ENCODE measurements at regions of chr7 and their contacts with region 1.

Region 1: GRCh38 chr7:65037740-65038678 is 31.5 kb upstream of the ERV3-1 start:
- DNase-seq: peak; percentile 96
- H3K4me3 ChIP-seq: peak overlapping the region; percentile 72 to 92 (median 90)
- H3K27ac ChIP-seq: peak overlapping the region; percentile 88 to 95 (median 92)
- H3K4me1 ChIP-seq: peaks cover 0 to 17% (median 5%) of the 10 kb centered on the region in 4 donors
- H3K27me3 ChIP-seq: no peaks in the 10 kb centered on the region
- CTCF ChIP-seq: no peak
- EP300 ChIP-seq: no peak
- POLR2A ChIP-seq: no peak

Region 2: DNA sequence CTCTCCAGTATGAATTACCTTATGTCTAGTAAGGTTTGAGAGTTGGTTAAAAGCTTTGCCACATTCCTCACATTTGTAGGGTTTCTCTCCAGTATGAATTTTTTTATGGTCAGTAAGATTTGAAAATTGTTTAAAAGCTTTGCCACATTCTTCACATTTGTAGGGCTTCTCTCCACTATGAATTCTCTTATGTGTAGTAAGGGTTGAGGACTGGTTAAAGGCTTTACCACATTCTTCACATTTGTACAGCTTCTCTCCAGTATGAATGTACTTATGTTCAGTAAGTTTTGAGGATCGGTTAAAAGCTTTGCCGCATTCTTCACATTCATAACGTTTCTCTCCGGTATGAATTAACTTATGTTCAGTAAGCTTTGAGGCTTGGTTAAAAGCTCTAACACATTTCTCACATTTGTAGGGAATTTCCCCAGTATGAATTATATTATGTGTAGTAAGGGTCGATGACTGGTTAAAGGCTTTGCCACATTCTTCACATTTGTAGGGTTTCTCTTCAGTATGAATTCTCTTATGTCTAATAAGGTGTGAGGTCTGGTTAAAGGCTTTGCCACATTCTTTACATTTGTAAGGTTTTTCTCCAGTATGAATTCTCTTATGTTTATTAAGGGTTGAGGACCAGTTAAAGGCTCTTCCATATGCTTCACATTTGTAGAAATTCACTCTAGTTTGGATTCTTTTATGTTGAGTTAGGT is 59.4 kb before region 1 on chr7:
- intact Hi-C with region 1: no loop called
- DNase-seq: no peak
- H3K4me3 ChIP-seq: no peak overlapping the region
- H3K27ac ChIP-seq: no peak overlapping the region
- H3K4me1 ChIP-seq: no peaks in the 10 kb centered on the region
- H3K27me3 ChIP-seq: no peaks in the 10 kb centered on the region
- CTCF ChIP-seq: no peak
- EP300 ChIP-seq: no peak
- POLR2A ChIP-seq: no peak

Region 3: GRCh38 chr7:64999165-65000004 is 38.6 kb before region 1 on chr7:
- intact Hi-C with region 1: loop called (anchors 2 kb)
- DNase-seq: no peak
- H3K4me3 ChIP-seq: no peak overlapping the region
- H3K27ac ChIP-seq: peak overlapping the region in 3 of 4 donors; percentile 55 to 75 (median 59)
- H3K4me1 ChIP-seq: peaks cover 0 to 25% (median 20%) of the 10 kb centered on the region in 4 donors
- H3K27me3 ChIP-seq: no peaks in the 10 kb centered on the region
- CTCF ChIP-seq: no peak
- EP300 ChIP-seq: no peak
- POLR2A ChIP-seq: no peak

Region 4: DNA sequence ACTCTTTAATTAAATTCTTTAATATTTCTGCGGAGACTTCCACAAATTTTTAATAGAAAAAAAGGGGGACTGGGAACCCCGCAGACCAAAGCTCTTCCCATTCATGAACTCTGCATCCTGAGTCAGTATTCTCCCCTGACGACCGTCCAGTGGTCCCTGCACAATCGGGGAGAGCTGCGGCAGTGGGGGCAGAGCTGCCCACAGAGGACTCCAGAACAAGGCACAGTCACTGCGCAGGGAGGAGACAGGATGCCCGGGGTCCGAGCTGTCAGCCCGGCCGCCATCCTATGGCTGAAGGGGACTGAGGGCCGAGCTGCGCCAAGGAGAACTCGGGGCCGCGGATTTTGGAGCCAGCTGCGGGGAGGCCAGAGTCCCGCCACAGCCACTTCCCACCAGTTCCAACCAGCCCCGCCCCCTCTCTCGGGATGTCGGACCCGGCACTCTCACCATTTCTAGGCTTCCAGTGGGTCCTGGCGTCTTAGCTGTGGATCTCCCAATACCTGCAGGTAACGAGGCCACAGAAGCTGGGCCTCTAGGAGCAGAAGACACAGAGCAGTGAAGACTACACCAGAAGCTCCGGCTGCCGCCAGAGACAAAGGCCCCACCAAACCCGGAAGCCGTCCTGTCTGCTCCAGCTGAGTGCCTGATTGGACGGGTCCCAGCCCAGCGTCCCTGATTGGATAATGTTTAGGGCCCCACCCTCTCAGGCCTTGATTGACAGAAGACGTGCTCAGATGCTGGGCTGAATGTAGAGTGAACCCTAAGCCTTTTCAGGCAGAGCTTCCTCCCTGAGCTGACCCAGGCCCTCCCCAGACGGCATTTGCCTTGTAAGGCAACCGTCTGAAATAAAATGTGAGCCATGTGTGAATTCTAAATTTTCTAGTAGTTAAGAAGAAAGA is 31.7 kb before region 1 on chr7 and contains the start of gene ERV3-1:
- intact Hi-C with region 1: loop called (anchors 1 kb)
- DNase-seq: peak; percentile 99
- H3K4me3 ChIP-seq: peak within 1 kb of the TSS; percentile 67 to 86 (median 70)
- H3K27ac ChIP-seq: peak within 1 kb of the TSS; percentile 83 to 89 (median 84)
- H3K4me1 ChIP-seq: peaks cover 0 to 36% (median 31%) of the 10 kb centered on the region in 4 donors
- H3K27me3 ChIP-seq: no peaks in the 10 kb centered on the region
- CTCF ChIP-seq: no peak
- EP300 ChIP-seq: no peak
- POLR2A ChIP-seq: peak; percentile 97 to 98
- total RNA-seq, gene ERV3-1: 9.6 to 19.1 (median 14.7) TPM

Measured in sigmoid colon (tissue), 7 donors.